A673 (cell line): ENCODE measurements at regions of chr1 and their contacts with region 1.

Region 1: GRCh38 chr1:61588736-61589672 is 135.9 kb downstream of the TM2D1 start:
- DNase-seq: peak; percentile 84
- H3K4me3 ChIP-seq: no peak overlapping the region
- H3K27ac ChIP-seq: no peak overlapping the region
- H3K4me1 ChIP-seq: peaks cover 9% of the 10 kb centered on the region
- H3K27me3 ChIP-seq: no peaks in the 10 kb centered on the region
- CTCF ChIP-seq: peak; percentile 93

Region 2: DNA sequence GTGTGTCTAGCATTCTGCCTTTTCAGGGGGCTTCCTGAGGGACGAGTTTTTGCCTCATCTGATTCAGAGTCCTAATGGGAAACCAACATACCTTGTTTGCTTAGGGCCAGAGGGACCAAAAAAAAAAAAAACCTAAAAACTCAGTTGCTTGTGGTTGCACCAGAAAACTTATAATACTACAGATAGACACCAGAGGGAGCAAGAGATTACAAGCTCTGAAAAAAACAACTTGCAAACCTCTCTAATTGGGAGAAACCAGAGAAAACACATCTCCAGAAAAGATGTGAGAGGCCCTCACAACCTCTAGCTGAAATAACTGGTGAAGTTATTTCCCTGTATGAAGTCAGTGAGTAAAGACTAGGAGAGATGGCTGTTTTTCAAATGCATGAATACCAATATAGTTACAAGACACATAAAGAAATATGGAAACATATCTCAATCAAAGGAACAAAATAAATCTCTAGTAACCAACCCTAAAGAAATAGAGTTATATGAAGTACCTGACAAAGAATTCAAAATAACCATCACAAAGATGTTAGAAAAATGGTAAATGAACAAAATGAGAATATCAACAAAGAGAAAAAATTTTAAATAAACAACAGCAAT is 740.3 kb before region 1 on chr1:
- CTCF ChIA-PET with region 1: interaction called, 3 read pairs
- POLR2A ChIA-PET with region 1: no interaction called
- intact Hi-C with region 1: loop called (anchors 2 kb)
- DNase-seq: peak; percentile 68
- H3K4me3 ChIP-seq: no peak overlapping the region
- H3K27ac ChIP-seq: no peak overlapping the region
- H3K4me1 ChIP-seq: no peaks in the 10 kb centered on the region
- H3K27me3 ChIP-seq: no peaks in the 10 kb centered on the region
- CTCF ChIP-seq: peak; percentile 69

Region 3: GRCh38 chr1:60978421-60979357 is 610.3 kb before region 1 on chr1:
- CTCF ChIA-PET with region 1: interaction called, 3 read pairs
- POLR2A ChIA-PET with region 1: no interaction called
- intact Hi-C with region 1: loop called (anchors 2 kb)
- DNase-seq: peak; percentile 70
- H3K4me3 ChIP-seq: no peak overlapping the region
- H3K27ac ChIP-seq: no peak overlapping the region
- H3K4me1 ChIP-seq: no peaks in the 10 kb centered on the region
- H3K27me3 ChIP-seq: no peaks in the 10 kb centered on the region
- CTCF ChIP-seq: peak; percentile 80

Region 4: GRCh38 chr1:61049850-61050540 is 539.0 kb before region 1 on chr1:
- CTCF ChIA-PET with region 1: interaction called, 9 read pairs
- POLR2A ChIA-PET with region 1: no interaction called
- intact Hi-C with region 1: loop called (anchors 10 kb)
- DNase-seq: peak; percentile 93
- H3K4me3 ChIP-seq: peak overlapping the region; percentile 82
- H3K27ac ChIP-seq: peak overlapping the region; percentile 86
- H3K4me1 ChIP-seq: peaks cover 8% of the 10 kb centered on the region
- H3K27me3 ChIP-seq: no peaks in the 10 kb centered on the region
- CTCF ChIP-seq: peak; percentile 97

Region 5: GRCh38 chr1:61287734-61288133 is 301.3 kb before region 1 on chr1:
- CTCF ChIA-PET with region 1: no interaction called
- POLR2A ChIA-PET with region 1: no interaction called
- intact Hi-C with region 1: no loop called
- DNase-seq: no peak
- H3K4me3 ChIP-seq: no peak overlapping the region
- H3K27ac ChIP-seq: no peak overlapping the region
- H3K4me1 ChIP-seq: peaks cover 22% of the 10 kb centered on the region
- H3K27me3 ChIP-seq: no peaks in the 10 kb centered on the region
- CTCF ChIP-seq: no peak

Region 6: GRCh38 chr1:61343734-61344420 is 245.1 kb before region 1 on chr1:
- CTCF ChIA-PET with region 1: no interaction called
- POLR2A ChIA-PET with region 1: no interaction called
- intact Hi-C with region 1: loop called (anchors 10 kb)
- DNase-seq: peak; percentile 80
- H3K4me3 ChIP-seq: no peak overlapping the region
- H3K27ac ChIP-seq: peak overlapping the region; percentile 68
- H3K4me1 ChIP-seq: peaks cover 34% of the 10 kb centered on the region
- H3K27me3 ChIP-seq: no peaks in the 10 kb centered on the region
- CTCF ChIP-seq: no peak

Region 7: DNA sequence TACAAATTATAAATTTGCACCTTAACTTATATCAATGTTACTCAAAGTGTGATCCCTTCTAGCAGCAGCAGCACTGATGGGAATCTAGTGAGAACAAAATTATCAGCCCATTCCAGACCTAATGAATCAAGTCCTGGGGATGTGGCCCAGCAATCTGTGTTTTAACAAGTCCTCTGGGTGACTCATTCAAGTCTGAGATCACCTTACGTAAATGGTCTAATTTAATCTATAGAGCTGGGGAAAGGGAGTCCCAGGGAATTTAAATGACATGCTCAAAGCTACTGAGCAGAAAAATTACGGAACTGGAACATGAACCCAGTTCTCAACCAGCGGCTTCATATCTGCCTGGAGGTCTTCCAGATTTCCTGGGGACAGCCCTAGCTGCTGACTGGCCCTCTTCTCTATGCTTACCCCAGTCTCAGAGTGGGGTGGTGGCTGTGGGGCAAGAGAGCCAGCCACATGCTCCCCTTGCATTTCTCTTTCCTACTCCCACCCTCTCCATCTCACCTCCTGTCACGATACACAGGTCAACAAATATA is 84.1 kb before region 1 on chr1:
- CTCF ChIA-PET with region 1: no interaction called
- POLR2A ChIA-PET with region 1: no interaction called
- intact Hi-C with region 1: no loop called
- DNase-seq: peak; percentile 44
- H3K4me3 ChIP-seq: no peak overlapping the region
- H3K27ac ChIP-seq: no peak overlapping the region
- H3K4me1 ChIP-seq: peaks cover 3% of the 10 kb centered on the region
- H3K27me3 ChIP-seq: no peaks in the 10 kb centered on the region
- CTCF ChIP-seq: no peak